GM10248 (cell line): ENCODE measurements at regions of chr2 and their contacts with region 1.

Region 1: GRCh38 chr2:229852565-229852964 is 69.2 kb downstream of the TRIP12 start:
- DNase-seq: peak; percentile 18
- CTCF ChIP-seq: no peak

Region 2: GRCh38 chr2:229586746-229587705 is 265.5 kb before region 1 on chr2:
- CTCF ChIA-PET with region 1: no interaction called
- POLR2A ChIA-PET with region 1: no interaction called
- DNase-seq: peak; percentile 63
- CTCF ChIP-seq: peak; percentile 56

Region 3: GRCh38 chr2:229835596-229836283 is 16.8 kb before region 1 on chr2:
- CTCF ChIA-PET with region 1: interaction called, 10 read pairs
- POLR2A ChIA-PET with region 1: no interaction called
- DNase-seq: no peak
- CTCF ChIP-seq: no peak

Region 4: DNA sequence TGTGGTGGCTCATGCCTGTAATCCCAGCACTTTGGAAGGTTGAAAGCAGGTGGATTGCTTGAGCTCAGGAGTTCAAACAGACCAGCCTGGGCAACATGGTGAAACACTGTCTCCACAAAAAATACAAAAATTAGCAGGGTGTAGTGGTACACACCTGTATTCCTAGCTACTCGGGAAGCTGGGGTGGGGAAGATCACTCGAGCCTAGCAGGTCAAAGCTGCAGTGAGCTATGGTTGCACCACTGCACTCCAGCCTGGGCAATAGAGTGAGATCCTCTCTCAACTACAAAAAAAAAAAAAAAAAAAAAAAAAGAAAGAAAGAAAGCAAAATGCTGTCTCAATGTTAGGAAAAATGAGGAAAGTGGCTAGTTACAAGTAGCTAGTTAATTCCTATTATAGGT is 12.5 kb after region 1 on chr2:
- CTCF ChIA-PET with region 1: interaction called, 13 read pairs
- POLR2A ChIA-PET with region 1: no interaction called
- DNase-seq: no peak
- CTCF ChIP-seq: no peak

Region 5: GRCh38 chr2:230244211-230244610 is 391.6 kb after region 1 on chr2:
- CTCF ChIA-PET with region 1: no interaction called
- POLR2A ChIA-PET with region 1: no interaction called
- DNase-seq: no peak
- CTCF ChIP-seq: no peak